ENCODE measurements at regions of chr6 and their contacts with region 1.

Region 1: DNA sequence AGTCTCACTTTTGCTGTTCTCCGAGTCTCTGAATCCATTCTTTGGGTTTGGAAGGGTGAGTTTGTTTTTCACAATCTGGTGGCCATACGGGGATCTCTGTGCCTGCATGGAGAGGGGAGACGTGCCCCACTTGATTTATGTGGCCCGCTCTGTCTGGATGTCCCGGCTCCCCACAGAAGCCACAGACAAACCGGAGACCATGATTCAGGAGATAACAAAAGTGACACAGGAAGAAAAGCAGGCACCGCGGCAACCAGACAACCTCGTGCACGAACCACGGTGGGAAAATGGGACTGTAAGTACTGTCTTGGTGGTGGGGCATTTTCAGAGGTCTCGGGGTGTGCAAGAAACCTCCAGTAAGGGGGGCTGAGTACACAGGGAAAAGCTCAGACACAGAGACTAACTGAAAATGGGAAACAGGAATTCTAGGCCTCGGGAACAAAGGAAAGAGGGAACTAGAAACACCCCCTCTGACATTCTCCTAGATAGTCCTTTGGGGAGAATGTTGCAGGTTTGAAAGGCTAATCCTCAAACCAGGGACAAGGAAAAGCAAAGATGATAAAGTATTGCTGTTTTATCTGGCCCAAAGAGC is 22.1 kb upstream of the ZNF318 start:
- DNase-seq: peak in 7 of 10 donors; percentile 30 to 56 (median 46)
- ATAC-seq: peak; percentile 85 to 87
- H3K4me3 Mint-ChIP-seq: peak overlapping the region; percentile 17 to 89 (median 78)
- H3K27ac Mint-ChIP-seq: peak overlapping the region in 7 of 10 donors; percentile 15 to 77 (median 45)
- H3K4me1 Mint-ChIP-seq: peaks cover 23 to 55% (median 41%) of the 10 kb centered on the region in 4 donors
- H3K27me3 Mint-ChIP-seq: peaks cover 3 to 27% (median 3%) of the 10 kb centered on the region in 5 donors

Region 2: GRCh38 chr6:43369174-43370022 is 22.1 kb before region 1 on chr6 and contains the start of gene ZNF318:
- POLR2A ChIA-PET with region 1: interaction called, 146 read pairs
- DNase-seq: peak; percentile 89 to 96 (median 92)
- ATAC-seq: peak; percentile 91 to 95
- H3K4me3 Mint-ChIP-seq: peak within 1 kb of the TSS; percentile 51 to 96 (median 93)
- H3K27ac Mint-ChIP-seq: peak within 1 kb of the TSS; percentile 92 to 98 (median 97)
- H3K4me1 Mint-ChIP-seq: peaks cover 23 to 72% (median 49%) of the 10 kb centered on the region in 4 donors
- H3K27me3 Mint-ChIP-seq: no peaks in the 10 kb centered on the region
- polyA plus RNA-seq, gene ZNF318: 3.4 to 7.0 (median 5.7) TPM